Gastrocnemius medialis (tissue), 4 donors: ENCODE measurements at regions of chr7 and their contacts with region 1.

Region 1: DNA sequence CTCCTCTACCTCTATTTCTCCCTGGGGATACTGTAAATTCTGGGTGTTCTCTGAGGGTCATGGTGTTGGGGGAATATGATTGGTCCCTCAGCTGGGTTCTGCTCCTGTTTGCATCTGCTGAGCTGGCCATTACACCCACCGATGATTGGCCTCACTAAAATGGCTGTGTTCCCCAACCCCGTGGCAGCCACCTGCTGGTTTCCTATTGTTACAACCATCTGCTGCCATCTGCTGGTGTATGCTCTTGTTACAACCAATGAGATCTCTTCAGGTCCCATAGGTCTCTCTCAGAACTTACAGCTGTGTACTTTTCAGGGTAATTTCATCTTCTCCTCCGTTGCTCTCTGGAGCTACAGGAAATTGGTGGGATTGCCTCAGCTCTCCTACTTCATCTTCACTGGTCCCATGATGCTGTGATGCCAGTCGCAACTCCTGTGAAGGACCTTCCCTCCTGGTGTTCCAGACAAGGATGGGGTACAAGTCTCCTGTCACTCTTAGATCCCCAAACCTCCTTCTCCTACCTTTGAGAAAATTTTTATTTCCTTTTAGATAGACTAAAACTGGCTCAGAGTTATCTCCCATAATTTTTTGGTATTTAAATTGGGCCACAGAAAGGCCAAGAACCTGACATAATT is 303.5 kb upstream of the SMIM30 start:
- DNase-seq: peak; percentile 42 to 52
- ATAC-seq: peak; percentile 60 to 81
- H3K4me3 ChIP-seq: no peak overlapping the region
- H3K27ac ChIP-seq: no peak overlapping the region
- H3K4me1 ChIP-seq: no peaks in the 10 kb centered on the region
- H3K27me3 ChIP-seq: no peaks in the 10 kb centered on the region
- CTCF ChIP-seq: peak; percentile 34 to 73 (median 67)
- POLR2A ChIP-seq: no peak

Region 2: GRCh38 chr7:112550468-112551060 is 871.2 kb before region 1 on chr7:
- in situ Hi-C with region 1: loop called in 3 of 4 experiments (anchors 10 to 25 kb)
- intact Hi-C with region 1: loop called (anchors 5 kb)
- DNase-seq: no peak
- ATAC-seq: peak in 1 of 2 donors; percentile 69
- H3K4me3 ChIP-seq: no peak overlapping the region
- H3K27ac ChIP-seq: no peak overlapping the region
- H3K4me1 ChIP-seq: no peaks in the 10 kb centered on the region
- H3K27me3 ChIP-seq: no peaks in the 10 kb centered on the region
- CTCF ChIP-seq: peak; percentile 59 to 92 (median 82)
- POLR2A ChIP-seq: no peak

Region 3: DNA sequence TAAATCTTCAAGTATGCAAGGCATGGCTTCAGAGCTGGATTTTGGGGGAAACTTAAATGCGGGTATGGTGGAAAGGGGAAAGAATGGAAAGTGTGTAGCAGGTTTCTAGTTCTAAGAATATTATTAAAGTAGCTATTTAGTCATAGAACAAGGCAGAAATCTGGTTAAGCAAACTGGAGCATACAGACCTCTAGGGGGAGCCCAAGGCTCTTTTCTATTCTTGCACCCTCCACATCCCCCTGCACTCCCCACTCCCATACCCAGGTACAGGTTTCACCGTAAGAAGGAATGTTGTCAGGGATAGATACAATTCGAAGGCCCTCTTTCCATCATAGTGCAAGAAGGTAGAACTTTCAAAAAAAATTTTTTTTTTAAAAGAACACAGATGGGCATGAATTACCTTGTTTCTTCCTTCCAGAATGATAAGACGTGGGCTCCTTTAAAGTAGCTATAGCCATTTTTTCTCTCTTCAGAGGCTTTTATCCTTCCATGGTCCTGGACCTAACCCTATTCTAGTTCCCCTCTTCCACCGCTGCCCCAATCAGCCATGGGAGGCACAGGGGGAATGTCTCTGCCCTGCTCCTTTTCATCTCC is 262.0 kb before region 1 on chr7:
- in situ Hi-C with region 1: no loop called
- intact Hi-C with region 1: loop called (anchors 5 kb)
- DNase-seq: no peak
- ATAC-seq: no peak
- H3K4me3 ChIP-seq: no peak overlapping the region
- H3K27ac ChIP-seq: no peak overlapping the region
- H3K4me1 ChIP-seq: no peaks in the 10 kb centered on the region
- H3K27me3 ChIP-seq: no peaks in the 10 kb centered on the region
- CTCF ChIP-seq: peak in 2 of 5 experiments; percentile 33 to 46
- POLR2A ChIP-seq: no peak

Region 4: GRCh38 chr7:113404245-113404644 is 17.6 kb before region 1 on chr7:
- in situ Hi-C with region 1: no loop called
- intact Hi-C with region 1: loop called (anchors 1 kb)
- DNase-seq: no peak
- ATAC-seq: peak in 1 of 2 donors; percentile 53
- H3K4me3 ChIP-seq: no peak overlapping the region
- H3K27ac ChIP-seq: no peak overlapping the region
- H3K4me1 ChIP-seq: no peaks in the 10 kb centered on the region
- H3K27me3 ChIP-seq: no peaks in the 10 kb centered on the region
- CTCF ChIP-seq: peak in 3 of 5 experiments; percentile 40 to 46 (median 45)
- POLR2A ChIP-seq: no peak

Region 5: GRCh38 chr7:113664867-113665266 is 243.1 kb after region 1 on chr7:
- in situ Hi-C with region 1: no loop called
- intact Hi-C with region 1: no loop called
- DNase-seq: no peak
- ATAC-seq: no peak
- H3K4me3 ChIP-seq: no peak overlapping the region
- H3K27ac ChIP-seq: no peak overlapping the region
- H3K4me1 ChIP-seq: no peaks in the 10 kb centered on the region
- H3K27me3 ChIP-seq: no peaks in the 10 kb centered on the region
- CTCF ChIP-seq: no peak
- POLR2A ChIP-seq: no peak

Region 6: DNA sequence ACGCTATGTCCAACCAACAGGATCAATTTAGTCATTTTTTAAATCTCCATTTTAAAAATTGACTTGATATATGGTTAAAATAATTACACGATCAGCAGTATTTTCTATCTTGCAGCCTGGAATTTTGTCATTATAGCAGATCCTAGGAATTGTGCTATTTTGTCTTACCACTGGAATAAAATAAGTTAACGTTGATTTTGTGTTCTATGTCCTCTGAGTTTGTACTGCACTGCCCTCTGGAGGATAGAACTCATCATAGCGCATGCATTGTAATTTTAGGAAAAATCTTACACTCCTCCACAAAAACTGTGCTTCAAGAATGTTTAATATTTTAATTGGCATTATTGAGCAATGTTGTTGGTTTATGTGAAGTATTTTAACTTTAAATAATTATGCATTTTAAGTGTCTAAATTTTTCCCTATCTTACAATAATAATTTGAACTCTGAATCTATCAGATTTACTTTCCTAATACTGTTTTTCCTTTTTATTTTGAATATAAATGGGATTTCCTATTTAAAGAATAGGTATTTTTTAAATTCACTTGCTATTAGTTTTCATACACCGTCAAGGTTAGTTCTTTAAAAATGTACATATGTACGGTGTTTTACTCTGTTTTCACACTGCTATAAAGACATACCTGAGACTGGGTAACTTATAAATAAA is 276.9 kb after region 1 on chr7:
- in situ Hi-C with region 1: no loop called
- intact Hi-C with region 1: loop called (anchors 5 kb)
- DNase-seq: no peak
- ATAC-seq: no peak
- H3K4me3 ChIP-seq: no peak overlapping the region
- H3K27ac ChIP-seq: no peak overlapping the region
- H3K4me1 ChIP-seq: peaks cover 0 to 22% of the 10 kb centered on the region in 2 donors
- H3K27me3 ChIP-seq: no peaks in the 10 kb centered on the region
- CTCF ChIP-seq: peak; percentile 49 to 76 (median 61)
- POLR2A ChIP-seq: no peak

Region 7: DNA sequence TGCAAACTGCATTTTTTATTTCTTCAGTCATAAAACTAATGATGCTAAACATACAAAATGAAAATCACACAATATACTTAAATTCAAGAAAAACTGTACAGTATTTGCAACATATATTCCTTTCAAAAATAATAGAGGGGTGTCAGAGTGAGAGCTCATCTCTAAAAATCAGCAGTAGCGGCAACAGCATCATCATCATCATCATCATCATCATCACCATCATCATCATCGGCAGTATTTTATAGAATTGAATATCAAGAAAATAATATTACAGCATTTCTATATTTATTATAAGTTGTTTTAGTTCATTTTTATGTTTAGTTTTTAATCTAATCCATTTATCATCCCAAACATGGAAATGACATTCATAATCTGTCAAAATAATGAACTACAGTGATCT is 564.4 kb after region 1 on chr7:
- in situ Hi-C with region 1: no loop called
- intact Hi-C with region 1: no loop called
- DNase-seq: no peak
- ATAC-seq: no peak
- H3K4me3 ChIP-seq: no peak overlapping the region
- H3K27ac ChIP-seq: no peak overlapping the region
- H3K4me1 ChIP-seq: no peaks in the 10 kb centered on the region
- H3K27me3 ChIP-seq: no peaks in the 10 kb centered on the region
- CTCF ChIP-seq: no peak
- POLR2A ChIP-seq: no peak